AG04449 (cell line): ENCODE measurements at regions of chr1 and their contacts with region 1.

Region 1: DNA sequence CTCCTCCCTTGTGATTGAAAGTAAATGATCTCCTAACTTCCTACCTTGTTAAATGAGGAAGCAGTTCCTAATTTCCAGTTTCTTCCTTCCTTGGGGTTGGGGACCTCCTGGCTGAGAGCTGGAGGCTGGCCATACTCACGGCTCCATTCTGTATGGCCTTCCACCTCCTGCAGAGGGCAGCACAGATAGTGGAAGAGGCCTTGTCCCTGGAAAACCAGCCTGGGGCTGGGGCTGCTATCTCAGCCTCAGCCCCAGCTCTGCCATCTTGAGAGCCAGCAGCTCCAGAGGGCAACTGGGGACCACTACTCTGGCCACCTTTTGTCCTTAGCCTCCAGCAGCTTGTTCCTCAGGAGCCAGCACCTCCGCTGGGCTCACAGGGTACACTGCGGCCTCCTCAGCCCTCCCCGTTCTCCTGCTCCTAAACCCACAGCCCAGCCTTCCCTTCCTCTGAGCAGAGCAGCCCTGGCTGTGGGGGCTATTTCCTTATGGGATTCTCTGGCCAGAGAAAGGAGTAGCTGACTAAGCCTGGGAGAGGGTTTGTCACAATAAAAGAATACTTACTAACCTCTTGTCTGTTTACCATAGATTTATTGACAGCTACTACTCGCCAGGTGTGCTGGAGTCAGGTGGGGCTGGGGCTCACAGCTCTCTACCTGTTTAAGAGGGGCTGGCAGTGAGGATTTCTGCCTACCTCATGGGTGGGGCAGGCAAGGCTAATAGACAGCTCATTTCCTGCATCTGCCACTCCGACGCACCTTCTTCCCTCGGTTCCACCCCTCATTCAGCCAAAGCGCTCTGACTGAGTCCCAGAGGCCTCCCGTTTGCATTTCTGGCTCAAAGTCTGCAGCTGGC is 6.3 kb downstream of the TMEM234 start:
- DNase-seq: no peak
- H3K4me3 ChIP-seq: no peak overlapping the region
- CTCF ChIP-seq: peak; percentile 86

Region 2: GRCh38 chr1:32205401-32206370 is 10.2 kb before region 1 on chr1 and contains the start of gene IQCC:
- CTCF ChIA-PET with region 1: interaction called, 54 read pairs
- POLR2A ChIA-PET with region 1: interaction called, 6 read pairs
- DNase-seq: no peak
- H3K4me3 ChIP-seq: peak within 1 kb of the TSS; percentile 77
- CTCF ChIP-seq: no peak

Region 3: GRCh38 chr1:32307323-32307722 is 91.5 kb after region 1 on chr1:
- CTCF ChIA-PET with region 1: interaction called, 16 read pairs
- POLR2A ChIA-PET with region 1: no interaction called
- DNase-seq: no peak
- H3K4me3 ChIP-seq: no peak overlapping the region
- CTCF ChIP-seq: no peak

Region 4: DNA sequence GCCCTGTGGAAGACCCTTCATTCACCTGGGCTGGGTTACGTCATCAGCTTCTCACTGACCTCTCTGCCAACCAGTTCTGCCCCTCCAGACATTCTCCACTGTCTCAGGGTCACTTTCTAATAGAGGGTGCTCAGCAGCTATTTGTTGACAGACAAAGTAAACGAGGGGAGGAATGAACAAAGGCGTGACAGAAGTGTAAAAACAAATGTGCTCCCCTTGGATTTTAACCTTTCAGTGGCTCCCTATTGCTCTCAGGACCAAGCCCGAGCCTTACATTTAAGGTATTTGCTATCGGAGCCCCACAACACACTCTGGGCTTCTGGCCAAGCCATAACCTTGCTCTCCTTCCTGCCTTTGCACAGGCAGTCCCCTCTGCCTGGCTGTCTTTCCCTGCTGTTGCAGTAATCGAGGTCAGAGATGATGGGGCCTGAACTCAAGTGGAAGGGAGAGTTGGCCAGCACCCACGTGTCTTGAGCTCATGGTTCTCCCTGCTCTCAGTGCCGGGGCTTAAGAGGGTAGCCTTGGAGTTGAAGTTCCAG is 129.5 kb after region 1 on chr1:
- CTCF ChIA-PET with region 1: interaction called, 26 read pairs
- POLR2A ChIA-PET with region 1: no interaction called
- DNase-seq: no peak
- H3K4me3 ChIP-seq: no peak overlapping the region
- CTCF ChIP-seq: no peak

Region 5: DNA sequence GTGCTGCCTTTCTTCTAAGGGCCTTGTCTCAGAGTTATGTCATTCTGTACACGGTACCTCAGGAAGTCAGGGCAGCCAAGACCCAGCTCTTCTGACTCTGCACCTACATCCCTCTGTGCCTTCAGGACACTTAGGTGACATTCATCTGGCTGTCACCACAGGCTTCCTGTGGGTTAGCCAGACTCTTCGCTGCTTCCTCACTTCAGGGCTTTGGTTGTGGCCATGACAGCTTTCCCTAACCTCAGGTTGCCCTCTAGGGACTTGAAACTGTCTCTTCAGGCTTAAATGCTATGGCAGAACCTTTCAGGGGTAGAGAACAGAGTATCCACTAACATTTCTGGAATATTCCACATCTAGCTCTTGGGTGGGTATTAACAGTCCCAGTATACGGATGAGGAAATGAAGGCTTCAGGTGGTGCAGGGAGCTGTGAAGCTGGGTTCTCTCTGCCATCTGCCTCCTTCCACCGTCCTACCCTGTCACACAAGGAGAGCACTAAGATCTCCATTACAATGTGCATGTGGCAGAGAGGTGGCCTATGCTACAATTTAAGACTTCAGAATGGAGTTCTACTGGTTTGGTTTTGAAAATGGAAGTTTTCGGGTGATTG is 156.4 kb after region 1 on chr1:
- CTCF ChIA-PET with region 1: interaction called, 12 read pairs
- POLR2A ChIA-PET with region 1: no interaction called
- DNase-seq: no peak
- H3K4me3 ChIP-seq: no peak overlapping the region
- CTCF ChIP-seq: no peak

Region 6: DNA sequence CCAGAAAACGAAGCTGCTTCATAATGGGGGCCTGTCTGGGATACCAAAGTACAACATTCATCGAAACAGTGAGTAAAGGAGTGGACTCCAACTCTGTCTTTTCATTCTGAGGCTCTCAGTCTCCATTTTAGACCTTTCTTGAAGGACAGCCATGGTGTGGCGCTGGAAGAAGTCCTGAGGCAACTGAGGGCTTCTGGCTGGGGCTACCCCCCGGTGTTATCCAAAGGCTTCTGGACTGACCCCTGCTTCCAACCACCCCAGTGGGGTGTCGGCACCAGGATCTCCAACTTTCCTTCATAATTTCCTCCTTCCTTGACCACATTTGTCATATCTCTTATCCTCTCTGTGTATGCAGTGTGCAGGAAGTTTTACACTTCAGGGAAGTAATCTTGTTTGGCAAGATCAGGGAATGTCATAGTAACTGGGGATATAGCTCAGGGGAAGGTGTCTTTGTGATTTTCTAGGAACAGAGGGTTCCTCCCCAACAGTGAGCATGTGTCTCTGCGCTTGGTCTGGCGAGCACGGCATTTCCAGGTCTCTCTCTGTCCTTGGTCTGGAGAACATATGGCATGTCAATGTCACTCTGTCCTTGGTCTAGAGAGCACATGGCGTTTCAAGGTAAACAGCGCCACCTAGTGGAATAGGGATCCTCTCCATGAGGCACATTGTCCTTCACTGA is 197.8 kb after region 1 on chr1:
- CTCF ChIA-PET with region 1: interaction called, 28 read pairs
- POLR2A ChIA-PET with region 1: no interaction called
- DNase-seq: no peak
- H3K4me3 ChIP-seq: no peak overlapping the region
- CTCF ChIP-seq: peak; percentile 66

Region 7: GRCh38 chr1:32516402-32516801 is 300.5 kb after region 1 on chr1:
- CTCF ChIA-PET with region 1: no interaction called
- POLR2A ChIA-PET with region 1: no interaction called
- DNase-seq: no peak
- H3K4me3 ChIP-seq: no peak overlapping the region
- CTCF ChIP-seq: no peak